Left cardiac atrium (tissue), 4 donors: ENCODE measurements at regions of chr15 and their contacts with region 1.

Region 1: DNA sequence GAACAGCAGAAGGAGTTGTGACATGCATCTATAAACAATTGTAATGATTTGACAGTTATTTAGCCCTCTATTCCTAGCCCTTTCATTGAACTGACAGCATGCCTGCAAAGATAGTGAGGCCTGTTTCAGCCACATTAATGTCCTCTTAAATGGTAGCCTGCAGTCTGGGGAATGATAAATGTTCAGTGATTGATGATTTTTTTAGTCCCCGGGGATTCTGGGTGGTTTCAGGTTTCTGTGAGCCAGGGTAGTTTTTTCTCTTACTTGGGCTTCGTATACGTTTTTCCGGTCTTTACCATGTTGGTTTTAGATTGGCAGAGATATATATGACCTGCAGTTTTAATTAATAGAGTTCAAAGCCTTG is 172.0 kb downstream of the TCF12 start:
- DNase-seq: no peak
- ATAC-seq: no peak

Region 2: GRCh38 chr15:57003418-57003817 is 87.1 kb before region 1 on chr15:
- intact Hi-C with region 1: loop called in 1 of 2 experiments (anchors 10 kb)
- DNase-seq: no peak
- ATAC-seq: no peak

Region 3: DNA sequence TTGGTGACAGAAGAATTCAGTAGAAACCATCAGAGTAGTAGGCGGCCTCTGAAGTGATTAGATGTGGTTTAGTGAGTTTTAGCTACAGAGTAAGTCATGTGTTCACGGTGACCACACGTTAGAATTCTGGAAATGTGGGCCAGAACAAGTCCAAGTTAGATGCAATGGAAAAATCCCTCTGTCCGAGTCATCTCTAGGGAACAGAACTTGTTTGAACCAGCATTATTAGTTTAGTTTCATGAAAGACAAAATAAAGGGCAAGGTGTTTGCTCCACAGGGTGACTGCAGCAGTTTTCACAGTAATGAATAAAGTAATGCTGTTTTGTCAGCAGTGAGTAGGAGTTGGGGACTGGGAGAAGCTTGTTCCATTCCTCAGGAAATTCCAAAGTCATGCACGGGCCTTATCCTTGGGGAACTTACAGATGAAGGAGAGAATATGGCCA is 386.1 kb after region 1 on chr15:
- intact Hi-C with region 1: no loop called
- DNase-seq: no peak
- ATAC-seq: peak; percentile 55 to 70